ENCODE measurements at regions of chr4 and their contacts with region 1.

Region 1: DNA sequence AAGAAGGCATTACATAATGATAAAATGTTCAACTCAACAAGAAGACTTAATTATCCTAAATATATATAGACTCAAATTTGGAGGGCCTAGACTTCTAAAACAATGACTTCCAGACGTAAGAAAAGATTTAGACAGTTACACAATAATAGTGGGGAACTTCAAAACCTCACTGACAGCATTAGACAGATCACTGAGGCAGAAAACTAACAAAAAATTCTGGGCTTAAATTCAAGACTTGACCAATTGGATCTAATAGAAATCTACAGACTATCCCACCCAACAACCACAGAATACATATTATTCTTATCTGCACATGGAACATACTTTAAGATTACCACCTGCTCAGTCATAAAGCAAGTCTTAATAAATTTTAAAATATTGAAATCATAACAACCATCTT is 93.3 kb upstream of the ARSJ start:
- DNase-seq: no peak
- ATAC-seq: no peak
- H3K4me3 ChIP-seq: no peak overlapping the region
- H3K27ac ChIP-seq: no peak overlapping the region
- H3K4me1 ChIP-seq: no peaks in the 10 kb centered on the region
- CTCF ChIP-seq: no peak
- EP300 ChIP-seq: no peak
- POLR2A ChIP-seq: no peak
- RAD21 ChIP-seq: no peak

Region 2: GRCh38 chr4:113952452-113953029 is 120.2 kb before region 1 on chr4:
- CTCF ChIA-PET with region 1: interaction called, 19 read pairs
- POLR2A ChIA-PET with region 1: no interaction called
- DNase-seq: peak; percentile 12 to 44
- ATAC-seq: peak; percentile 83 to 92
- H3K4me3 ChIP-seq: no peak overlapping the region
- H3K27ac ChIP-seq: no peak overlapping the region
- H3K4me1 ChIP-seq: peaks cover 2% of the 10 kb centered on the region; the same call in 1 of the 3 replicates
- CTCF ChIP-seq: peak; percentile 68
- EP300 ChIP-seq: no peak
- POLR2A ChIP-seq: no peak
- RAD21 ChIP-seq: peak; percentile 85 to 86

Region 3: DNA sequence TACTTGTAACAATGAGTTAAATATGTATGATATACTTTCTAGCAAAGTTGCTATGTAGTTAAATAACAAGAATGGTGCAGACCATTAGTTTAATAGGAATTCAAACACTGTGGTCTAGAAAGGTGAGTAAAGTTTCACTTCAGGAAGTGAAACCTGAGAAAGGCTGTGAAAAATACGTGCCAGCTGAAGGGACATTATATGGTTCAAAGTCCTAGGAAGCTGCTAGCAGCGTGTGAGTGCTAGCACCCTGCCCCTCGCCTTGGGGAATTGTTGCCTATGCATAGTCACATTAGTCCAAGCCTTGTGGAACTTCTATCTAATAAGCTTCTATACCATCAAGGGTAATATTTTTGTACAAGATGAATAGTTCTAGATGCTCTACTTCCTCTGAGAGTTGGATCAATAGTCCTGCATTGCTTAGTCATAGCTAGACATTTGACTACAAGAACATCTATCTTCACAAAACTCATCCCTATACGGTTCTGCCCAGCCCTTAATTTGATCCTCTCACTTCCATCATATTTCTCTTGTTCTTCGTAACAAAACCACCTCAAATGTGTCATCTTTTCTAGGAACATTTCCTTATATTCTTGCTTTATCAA is 47.5 kb before region 1 on chr4:
- CTCF ChIA-PET with region 1: no interaction called
- POLR2A ChIA-PET with region 1: no interaction called
- DNase-seq: no peak
- ATAC-seq: no peak
- H3K4me3 ChIP-seq: no peak overlapping the region
- H3K27ac ChIP-seq: no peak overlapping the region
- H3K4me1 ChIP-seq: no peaks in the 10 kb centered on the region
- CTCF ChIP-seq: no peak
- EP300 ChIP-seq: no peak
- POLR2A ChIP-seq: no peak
- RAD21 ChIP-seq: no peak

Measured in A549 (cell line).